ENCODE measurements at regions of chr17 and their contacts with region 1.

Region 1: DNA sequence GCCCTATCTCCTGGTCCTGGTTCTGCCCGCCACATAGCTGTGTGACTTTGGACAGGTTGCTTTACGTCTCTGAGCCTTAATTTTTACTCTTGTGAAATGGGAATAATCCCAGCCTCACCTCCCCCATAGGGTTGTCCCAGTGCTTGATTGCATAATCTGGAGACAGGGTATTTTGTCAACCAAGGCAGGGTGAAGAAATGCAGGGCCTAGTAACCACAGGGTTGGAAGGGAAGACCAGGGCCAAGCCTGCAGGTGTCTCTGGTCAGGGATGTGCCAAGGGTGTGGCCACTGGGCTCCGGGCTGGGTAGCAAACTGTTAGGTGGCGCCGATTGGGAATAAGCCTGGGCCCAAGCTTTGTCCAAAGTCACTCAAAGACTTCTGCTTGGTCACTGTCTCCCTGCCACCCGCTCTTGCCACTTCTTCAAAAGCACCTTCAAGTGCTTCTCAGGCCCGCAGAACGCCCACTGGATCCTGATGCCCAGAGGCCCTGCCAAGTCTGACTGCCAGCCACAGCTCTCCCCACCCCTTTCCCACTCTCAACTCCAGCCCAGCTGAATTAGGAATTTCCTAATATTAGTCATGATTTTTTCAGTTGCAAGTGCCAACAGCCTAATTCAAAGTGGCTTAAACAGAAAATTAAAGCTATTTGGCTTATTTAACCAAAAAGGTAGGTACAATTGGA is 20.6 kb upstream of the COL1A1 start:
- DNase-seq: peak; percentile 84 to 94
- H3K4me3 ChIP-seq: peak overlapping the region; percentile 14 to 24
- H3K27ac ChIP-seq: peak overlapping the region; percentile 85 to 94
- H3K4me1 ChIP-seq: peaks cover 9 to 68% (median 55%) of the 10 kb centered on the region in 4 donors
- H3K27me3 ChIP-seq: no peaks in the 10 kb centered on the region
- CTCF ChIP-seq: no peak

Region 2: GRCh38 chr17:50269477-50270434 is 47.8 kb after region 1 on chr17:
- intact Hi-C with region 1: loop called (anchors 5 kb)
- DNase-seq: peak; percentile 87 to 88
- H3K4me3 ChIP-seq: no peak overlapping the region
- H3K27ac ChIP-seq: peak overlapping the region; percentile 89 to 91
- H3K4me1 ChIP-seq: peaks cover 10 to 63% (median 56%) of the 10 kb centered on the region in 4 donors
- H3K27me3 ChIP-seq: peaks cover 0 to 9% of the 10 kb centered on the region in 2 donors
- CTCF ChIP-seq: peak; percentile 80 to 83

Measured in tibial artery (tissue), 4 donors.